B cell (primary cell): ENCODE measurements at regions of chr9 and their contacts with region 1.

Region 1: GRCh38 chr9:36102742-36103495 is 33.6 kb upstream of the GLIPR2 start:
- DNase-seq: peak; percentile 88
- ATAC-seq: peak; percentile 99
- H3K4me3 ChIP-seq: no peak overlapping the region
- H3K4me3 Mint-ChIP-seq: no peak overlapping the region
- H3K27ac ChIP-seq: no peak overlapping the region
- H3K27ac Mint-ChIP-seq: no peak overlapping the region
- H3K4me1 ChIP-seq: peaks cover 0 to 3% of the 10 kb centered on the region in 2 donors
- H3K4me1 Mint-ChIP-seq: peaks cover 5% of the 10 kb centered on the region
- H3K27me3 ChIP-seq: no peaks in the 10 kb centered on the region
- H3K27me3 Mint-ChIP-seq: no peaks in the 10 kb centered on the region
- CTCF ChIP-seq: peak; percentile 90

Region 2: DNA sequence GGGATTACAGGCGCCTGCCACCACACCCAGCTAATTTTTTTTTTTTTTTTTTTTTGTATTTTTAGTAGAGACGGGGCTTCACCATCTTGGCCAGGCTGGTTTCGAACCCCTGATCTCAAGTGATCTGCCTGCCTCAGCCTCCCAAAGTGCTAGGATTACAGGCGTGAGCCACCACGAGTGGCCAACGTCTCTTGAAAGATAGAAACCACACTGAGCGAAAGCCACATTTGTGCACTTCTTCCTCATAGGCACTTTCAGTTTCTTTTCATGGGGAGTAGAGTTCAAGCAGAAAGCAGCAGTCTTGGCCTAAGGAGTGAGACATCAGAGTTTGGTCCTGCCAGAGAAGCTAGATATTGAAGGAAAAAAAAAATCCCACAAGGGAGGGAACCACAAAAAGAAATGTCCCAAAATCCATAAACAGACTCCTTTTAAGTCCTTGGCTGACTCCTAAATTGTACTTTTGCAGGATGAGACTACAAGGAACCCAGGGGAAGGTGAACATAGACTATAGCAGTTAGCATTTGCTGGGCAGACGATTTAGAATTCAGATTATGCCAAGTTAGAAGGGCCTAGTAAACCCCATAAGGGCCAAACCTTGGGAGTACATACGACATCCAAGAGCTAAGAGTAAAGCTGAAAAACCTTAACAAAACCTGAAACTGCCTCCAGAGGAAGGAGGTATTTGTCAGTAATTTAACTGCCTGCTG is 10.3 kb before region 1 on chr9:
- CTCF ChIA-PET with region 1: interaction called, 25 read pairs
- POLR2A ChIA-PET with region 1: no interaction called
- intact Hi-C with region 1: no loop called
- DNase-seq: peak; percentile 76
- ATAC-seq: peak; percentile 98
- H3K4me3 ChIP-seq: peak overlapping the region in 1 of 5 experiments; percentile 41
- H3K4me3 Mint-ChIP-seq: peak overlapping the region; percentile 69
- H3K27ac ChIP-seq: peak overlapping the region; percentile 48 to 83
- H3K27ac Mint-ChIP-seq: peak overlapping the region; percentile 84
- H3K4me1 ChIP-seq: peaks cover 13 to 15% of the 10 kb centered on the region in 2 donors
- H3K4me1 Mint-ChIP-seq: peaks cover 14% of the 10 kb centered on the region
- H3K27me3 ChIP-seq: no peaks in the 10 kb centered on the region
- H3K27me3 Mint-ChIP-seq: no peaks in the 10 kb centered on the region
- CTCF ChIP-seq: no peak

Region 3: GRCh38 chr9:36136272-36136893 is 33.5 kb after region 1 on chr9 and contains the start of gene GLIPR2:
- CTCF ChIA-PET with region 1: interaction called, 31 read pairs
- POLR2A ChIA-PET with region 1: no interaction called
- intact Hi-C with region 1: loop called (anchors 1 kb)
- DNase-seq: peak; percentile 86
- ATAC-seq: peak; percentile 99
- H3K4me3 ChIP-seq: peak within 1 kb of the TSS; percentile 47 to 79 (median 68)
- H3K4me3 Mint-ChIP-seq: peak within 1 kb of the TSS; percentile 96
- H3K27ac ChIP-seq: peak within 1 kb of the TSS; percentile 11 to 75
- H3K27ac Mint-ChIP-seq: peak within 1 kb of the TSS; percentile 93
- H3K4me1 ChIP-seq: peaks cover 38 to 39% of the 10 kb centered on the region in 2 donors
- H3K4me1 Mint-ChIP-seq: peaks cover 50% of the 10 kb centered on the region
- H3K27me3 ChIP-seq: no peaks in the 10 kb centered on the region
- H3K27me3 Mint-ChIP-seq: no peaks in the 10 kb centered on the region
- CTCF ChIP-seq: peak; percentile 17
- total RNA-seq, gene GLIPR2: 13.7 and 15.2 TPM in 2 replicates

Region 4: GRCh38 chr9:36142510-36143244 is 39.8 kb after region 1 on chr9:
- CTCF ChIA-PET with region 1: interaction called, 31 read pairs
- POLR2A ChIA-PET with region 1: no interaction called
- intact Hi-C with region 1: no loop called
- DNase-seq: peak; percentile 62
- ATAC-seq: peak; percentile 54
- H3K4me3 ChIP-seq: peak overlapping the region; percentile 43 to 83 (median 80)
- H3K4me3 Mint-ChIP-seq: peak overlapping the region; percentile 93
- H3K27ac ChIP-seq: peak overlapping the region; percentile 85 to 92
- H3K27ac Mint-ChIP-seq: peak overlapping the region; percentile 99
- H3K4me1 ChIP-seq: peaks cover 63 to 78% of the 10 kb centered on the region in 2 donors
- H3K4me1 Mint-ChIP-seq: peaks cover 93% of the 10 kb centered on the region
- H3K27me3 ChIP-seq: no peaks in the 10 kb centered on the region
- H3K27me3 Mint-ChIP-seq: no peaks in the 10 kb centered on the region
- CTCF ChIP-seq: no peak

Region 5: GRCh38 chr9:36148311-36149051 is 45.6 kb after region 1 on chr9:
- CTCF ChIA-PET with region 1: interaction called, 31 read pairs
- POLR2A ChIA-PET with region 1: no interaction called
- intact Hi-C with region 1: loop called (anchors 1 kb)
- DNase-seq: no peak
- ATAC-seq: no peak
- H3K4me3 ChIP-seq: no peak overlapping the region
- H3K4me3 Mint-ChIP-seq: no peak overlapping the region
- H3K27ac ChIP-seq: no peak overlapping the region
- H3K27ac Mint-ChIP-seq: no peak overlapping the region
- H3K4me1 ChIP-seq: peaks cover 51 to 82% of the 10 kb centered on the region in 2 donors
- H3K4me1 Mint-ChIP-seq: peaks cover 76% of the 10 kb centered on the region
- H3K27me3 ChIP-seq: no peaks in the 10 kb centered on the region
- H3K27me3 Mint-ChIP-seq: no peaks in the 10 kb centered on the region
- CTCF ChIP-seq: no peak

Region 6: DNA sequence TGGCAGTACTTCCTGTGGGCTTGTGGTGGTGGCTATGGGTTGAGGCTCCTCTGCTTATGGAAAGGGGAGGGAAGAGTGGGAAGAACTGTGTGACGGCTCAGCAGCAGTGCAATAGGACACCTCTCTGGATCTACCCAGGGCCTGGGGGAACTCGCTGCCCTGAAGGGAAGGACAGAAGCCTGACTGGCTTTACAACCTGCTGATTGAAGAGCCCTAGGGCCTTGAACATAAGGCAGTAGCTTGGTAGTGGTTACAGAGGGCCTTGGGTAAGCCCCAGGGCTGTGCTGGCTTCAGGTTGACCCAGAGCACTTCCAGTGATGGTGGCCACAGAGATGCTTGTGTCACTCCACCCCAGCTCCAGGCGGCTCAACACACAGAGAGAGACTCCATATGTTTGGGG is 71.8 kb after region 1 on chr9:
- CTCF ChIA-PET with region 1: interaction called, 435 read pairs
- POLR2A ChIA-PET with region 1: no interaction called
- intact Hi-C with region 1: no loop called
- DNase-seq: no peak
- ATAC-seq: no peak
- H3K4me3 ChIP-seq: no peak overlapping the region
- H3K4me3 Mint-ChIP-seq: no peak overlapping the region
- H3K27ac ChIP-seq: no peak overlapping the region
- H3K27ac Mint-ChIP-seq: no peak overlapping the region
- H3K4me1 ChIP-seq: no peaks in the 10 kb centered on the region
- H3K4me1 Mint-ChIP-seq: no peaks in the 10 kb centered on the region
- H3K27me3 ChIP-seq: no peaks in the 10 kb centered on the region
- H3K27me3 Mint-ChIP-seq: peaks cover 2% of the 10 kb centered on the region
- CTCF ChIP-seq: no peak

Region 7: GRCh38 chr9:36328798-36329411 is 226.0 kb after region 1 on chr9:
- CTCF ChIA-PET with region 1: interaction called, 9 read pairs
- POLR2A ChIA-PET with region 1: no interaction called
- intact Hi-C with region 1: loop called (anchors 1 kb)
- DNase-seq: peak; percentile 76
- ATAC-seq: peak; percentile 31
- H3K4me3 ChIP-seq: no peak overlapping the region
- H3K4me3 Mint-ChIP-seq: no peak overlapping the region
- H3K27ac ChIP-seq: no peak overlapping the region
- H3K27ac Mint-ChIP-seq: no peak overlapping the region
- H3K4me1 ChIP-seq: no peaks in the 10 kb centered on the region
- H3K4me1 Mint-ChIP-seq: peaks cover 2% of the 10 kb centered on the region
- H3K27me3 ChIP-seq: no peaks in the 10 kb centered on the region
- H3K27me3 Mint-ChIP-seq: no peaks in the 10 kb centered on the region
- CTCF ChIP-seq: peak; percentile 85